Right cardiac atrium (tissue), 5 donors: ENCODE measurements at regions of chr3 and their contacts with region 1.

Region 1: GRCh38 chr3:16177962-16178627 is 3.6 kb downstream of the GALNT15 start:
- DNase-seq: peak; percentile 86 to 94 (median 93)
- ATAC-seq: peak; percentile 73 to 80
- H3K4me3 ChIP-seq: peak overlapping the region; percentile 34
- H3K27ac ChIP-seq: no peak overlapping the region
- H3K4me1 ChIP-seq: peaks cover 10% of the 10 kb centered on the region
- H3K27me3 ChIP-seq: no peaks in the 10 kb centered on the region

Region 2: GRCh38 chr3:15815696-15816095 is 362.4 kb before region 1 on chr3:
- intact Hi-C with region 1: loop called in 1 of 4 experiments (anchors 5 kb)
- DNase-seq: no peak
- ATAC-seq: no peak
- H3K4me3 ChIP-seq: no peak overlapping the region
- H3K27ac ChIP-seq: no peak overlapping the region
- H3K4me1 ChIP-seq: no peaks in the 10 kb centered on the region
- H3K27me3 ChIP-seq: no peaks in the 10 kb centered on the region

Region 3: DNA sequence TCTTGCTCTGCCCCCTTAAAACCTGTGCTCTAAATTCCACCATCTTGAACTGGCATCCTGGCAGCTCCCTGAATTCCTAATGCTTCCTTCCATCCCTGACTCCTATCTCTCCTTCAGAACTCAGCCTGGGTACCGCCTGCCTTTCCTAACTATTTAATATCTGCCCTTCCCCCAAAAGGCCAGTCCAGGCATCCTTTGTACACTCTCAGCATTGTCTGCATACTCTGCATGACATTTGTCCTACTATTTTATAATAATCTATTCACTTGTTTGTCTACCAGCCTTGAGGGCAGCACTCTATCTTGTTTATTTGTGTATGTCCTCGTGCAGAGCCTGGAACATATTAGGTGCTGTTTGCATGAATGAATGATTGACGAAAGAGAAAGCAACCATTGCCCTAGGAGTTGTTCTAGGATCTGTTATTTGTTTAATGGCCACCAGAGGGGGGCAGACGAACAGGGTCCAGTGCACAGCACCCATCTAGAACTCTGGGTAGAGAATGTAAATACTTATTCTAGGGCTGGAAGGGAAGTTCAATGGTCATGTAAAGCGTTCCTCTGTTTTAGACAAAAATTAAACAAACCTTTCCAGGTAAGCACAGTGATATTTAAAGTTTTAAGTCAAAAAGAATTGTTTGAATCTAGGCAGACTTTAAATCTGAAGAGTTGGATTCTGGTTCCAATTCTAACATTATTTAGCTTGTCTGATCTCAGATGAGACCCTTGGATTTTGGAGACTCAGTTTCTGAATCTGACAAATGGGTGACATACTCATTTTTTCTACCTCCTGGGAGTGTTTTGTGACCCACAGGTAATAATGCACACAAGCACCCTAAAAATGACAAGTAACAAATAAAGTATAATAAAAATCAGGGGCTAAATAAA is 129.4 kb before region 1 on chr3:
- intact Hi-C with region 1: loop called (anchors 2 to 5 kb)
- DNase-seq: peak in 1 of 3 donors; percentile 54
- ATAC-seq: peak; percentile 90 to 92
- H3K4me3 ChIP-seq: no peak overlapping the region
- H3K27ac ChIP-seq: no peak overlapping the region
- H3K4me1 ChIP-seq: peaks cover 5% of the 10 kb centered on the region
- H3K27me3 ChIP-seq: no peaks in the 10 kb centered on the region

Region 4: GRCh38 chr3:16254916-16255315 is 76.8 kb after region 1 on chr3:
- intact Hi-C with region 1: no loop called
- DNase-seq: no peak
- ATAC-seq: no peak
- H3K4me3 ChIP-seq: no peak overlapping the region
- H3K27ac ChIP-seq: no peak overlapping the region
- H3K4me1 ChIP-seq: peaks cover 3% of the 10 kb centered on the region
- H3K27me3 ChIP-seq: no peaks in the 10 kb centered on the region

Region 5: DNA sequence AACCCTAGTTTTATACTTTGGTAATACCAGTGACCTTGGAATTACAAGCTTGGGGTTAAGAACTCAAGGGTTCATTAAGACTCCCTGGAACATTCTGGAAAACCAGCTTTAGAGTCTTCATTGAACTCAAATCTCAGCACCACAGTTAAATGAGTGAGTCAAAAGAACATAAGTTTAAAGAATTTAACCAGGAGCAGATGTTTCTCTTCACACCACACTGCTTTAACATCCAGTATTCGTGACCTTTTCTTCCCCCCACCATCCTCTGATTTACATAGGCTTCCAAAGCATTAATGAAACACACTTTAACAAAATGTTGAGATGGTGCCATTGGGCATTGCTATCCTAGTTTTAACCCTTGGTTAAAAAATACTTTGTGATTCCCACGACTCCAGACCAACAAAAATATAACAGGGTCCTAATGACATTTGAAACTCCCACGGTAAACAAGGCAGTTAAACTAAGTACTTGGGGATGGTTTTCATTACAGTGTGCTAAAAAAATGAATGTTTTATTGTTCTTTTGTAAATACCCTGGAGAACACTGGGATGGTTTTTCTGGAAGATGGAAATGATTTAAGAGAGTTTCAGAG is 210.9 kb after region 1 on chr3:
- intact Hi-C with region 1: no loop called
- DNase-seq: no peak
- ATAC-seq: peak in 1 of 2 donors; percentile 23
- H3K4me3 ChIP-seq: no peak overlapping the region
- H3K27ac ChIP-seq: no peak overlapping the region
- H3K4me1 ChIP-seq: peaks cover 7% of the 10 kb centered on the region
- H3K27me3 ChIP-seq: no peaks in the 10 kb centered on the region

Region 6: DNA sequence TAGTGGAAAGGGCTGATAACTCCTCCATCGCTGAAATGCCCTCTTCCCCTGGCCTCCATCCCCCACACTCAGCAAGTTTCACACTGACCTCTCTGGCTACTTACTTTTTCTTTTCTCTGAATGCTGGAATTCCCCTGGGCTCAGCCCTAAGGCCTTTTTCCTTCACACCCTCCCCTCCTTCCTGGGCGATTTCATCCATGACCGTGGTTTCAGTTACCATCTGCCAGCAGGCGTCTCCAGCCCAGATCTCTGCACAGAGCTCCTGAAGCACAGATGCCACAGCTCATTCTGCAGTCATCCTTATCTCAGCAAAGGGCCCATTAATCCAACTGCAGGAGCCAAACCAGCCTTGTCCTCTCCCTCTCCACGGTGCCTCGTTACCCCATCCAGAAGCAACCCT is 221.4 kb after region 1 on chr3:
- intact Hi-C with region 1: no loop called
- DNase-seq: peak; percentile 62 to 78 (median 76)
- ATAC-seq: peak; percentile 84
- H3K4me3 ChIP-seq: no peak overlapping the region
- H3K27ac ChIP-seq: no peak overlapping the region
- H3K4me1 ChIP-seq: peaks cover 22% of the 10 kb centered on the region
- H3K27me3 ChIP-seq: no peaks in the 10 kb centered on the region